ENCODE measurements at regions of chr2 and their contacts with region 1.

Region 1: DNA sequence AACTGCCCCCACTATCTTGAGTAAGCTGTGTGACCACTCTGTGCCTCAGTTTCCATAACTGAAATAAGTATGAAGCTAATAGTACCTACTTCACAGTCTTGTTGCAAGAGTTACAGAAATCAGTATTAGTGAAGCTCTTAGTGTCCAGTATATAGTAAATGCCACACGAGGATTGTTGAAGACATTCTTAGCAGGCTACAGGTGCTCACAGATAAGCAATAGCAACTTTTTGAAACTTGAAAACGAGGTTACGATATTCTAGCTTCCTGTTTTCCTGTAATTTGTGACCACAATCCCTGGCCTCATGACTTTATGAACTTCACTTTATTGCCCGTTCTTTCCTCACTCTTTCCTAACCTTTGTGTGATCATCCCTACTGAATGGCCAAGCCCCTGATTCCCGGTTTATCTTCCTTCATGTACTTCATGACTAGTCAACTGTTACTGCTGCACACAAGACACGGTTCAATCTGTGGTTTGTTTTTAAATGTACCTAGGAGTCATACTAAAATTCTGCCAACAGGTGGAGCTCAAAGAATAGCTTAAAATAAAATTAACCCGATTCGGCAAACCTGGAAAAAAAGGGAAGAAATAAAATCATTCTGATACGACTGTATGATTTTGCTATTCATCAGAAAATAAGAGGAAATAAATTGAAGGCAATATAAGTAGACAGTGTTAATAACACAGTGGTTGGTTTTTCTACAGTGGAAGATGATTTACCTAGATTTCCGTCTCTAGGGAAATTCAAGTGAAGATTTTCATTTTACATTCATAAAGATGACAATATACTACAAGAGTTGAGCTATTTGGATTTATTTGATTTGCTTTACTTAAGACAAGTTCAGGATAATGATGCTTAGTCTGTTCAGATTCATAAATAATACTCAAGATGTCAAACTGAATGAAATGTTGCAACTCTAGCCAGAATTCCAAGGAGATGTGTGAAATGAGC is 38.1 kb upstream of the STAT1 start:
- DNase-seq: no peak
- H3K4me3 ChIP-seq: no peak overlapping the region
- H3K27ac ChIP-seq: no peak overlapping the region
- H3K27me3 ChIP-seq: no peaks in the 10 kb centered on the region
- CTCF ChIP-seq: peak; percentile 69

Region 2: GRCh38 chr2:190979906-190980629 is 72.0 kb before region 1 on chr2:
- CTCF ChIA-PET with region 1: no interaction called
- POLR2A ChIA-PET with region 1: no interaction called
- DNase-seq: peak; percentile 88
- H3K4me3 ChIP-seq: peak overlapping the region; percentile 8
- H3K27ac ChIP-seq: peak overlapping the region; percentile 49
- H3K27me3 ChIP-seq: no peaks in the 10 kb centered on the region
- CTCF ChIP-seq: no peak

Region 3: DNA sequence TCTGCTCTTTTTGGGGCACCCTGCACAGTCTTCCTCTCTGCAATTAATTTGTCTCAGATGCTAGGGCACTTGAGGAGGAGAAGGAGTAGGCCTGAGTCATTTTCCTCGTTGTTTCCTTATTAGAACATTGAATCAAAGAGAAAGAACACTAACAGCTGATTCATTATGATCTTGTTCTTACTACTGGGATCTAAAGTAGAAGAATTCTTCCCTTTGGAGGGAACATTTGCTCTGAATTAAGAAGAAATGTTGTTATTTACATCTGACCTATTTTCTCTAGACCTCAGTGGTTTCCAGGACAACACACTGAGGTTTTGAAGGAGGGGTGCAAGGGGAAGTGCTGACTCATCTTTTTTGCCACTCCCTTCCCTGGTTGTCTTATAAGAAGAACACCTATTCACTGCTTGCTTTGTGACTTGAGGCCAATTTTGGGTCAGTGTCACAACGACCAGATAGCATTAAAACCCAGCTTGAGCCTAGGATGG is 13.8 kb before region 1 on chr2:
- CTCF ChIA-PET with region 1: interaction called, 38 read pairs
- POLR2A ChIA-PET with region 1: no interaction called
- DNase-seq: no peak
- H3K4me3 ChIP-seq: no peak overlapping the region
- H3K27ac ChIP-seq: peak overlapping the region; percentile 80
- H3K27me3 ChIP-seq: no peaks in the 10 kb centered on the region
- CTCF ChIP-seq: no peak

Region 4: DNA sequence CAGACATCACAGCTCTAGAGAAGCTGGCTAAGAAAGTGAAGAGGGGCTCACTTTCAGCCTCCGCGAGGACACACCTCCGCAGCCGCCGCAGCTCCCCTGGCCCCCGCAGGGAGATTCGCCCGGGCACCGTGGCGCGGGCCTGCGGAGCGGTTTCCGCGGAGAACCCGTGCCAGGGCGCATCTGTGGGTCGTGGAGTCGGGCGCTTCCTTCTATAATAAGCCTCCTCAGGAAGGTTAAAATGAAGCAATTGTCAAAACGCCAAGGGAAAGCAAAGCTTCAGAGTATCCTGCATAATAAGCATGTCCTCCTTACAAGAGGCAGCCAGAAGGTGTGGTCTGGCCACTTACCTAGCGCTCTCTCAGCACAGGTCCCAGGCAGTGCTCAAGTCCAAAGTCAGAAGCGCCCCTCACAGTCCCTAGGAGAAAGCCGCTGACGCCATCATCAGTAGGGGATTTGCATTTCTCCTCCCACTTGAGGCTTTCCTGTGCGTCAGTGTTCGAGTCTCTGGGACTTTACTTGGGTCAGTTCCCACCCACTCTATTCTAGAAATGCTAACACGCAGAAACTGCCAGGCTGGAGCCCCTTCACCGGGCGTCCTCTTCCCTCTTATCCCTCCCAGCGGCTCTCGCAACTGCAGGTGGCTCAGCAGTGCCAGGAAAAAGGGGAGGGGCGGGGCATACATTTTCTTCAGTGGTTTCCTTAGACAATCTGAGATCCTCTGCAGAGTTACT is 98.7 kb after region 1 on chr2 and contains the start of gene STAT4:
- CTCF ChIA-PET with region 1: interaction called, 251 read pairs
- POLR2A ChIA-PET with region 1: interaction called, 4 read pairs
- DNase-seq: no peak
- H3K4me3 ChIP-seq: peak within 1 kb of the TSS; percentile 58
- H3K27ac ChIP-seq: no peak within 1 kb of the TSS
- H3K27me3 ChIP-seq: no peaks in the 10 kb centered on the region
- CTCF ChIP-seq: no peak
- polyA plus RNA-seq, gene STAT4: 0.88 and 1.3 TPM in 2 replicates

Region 5: DNA sequence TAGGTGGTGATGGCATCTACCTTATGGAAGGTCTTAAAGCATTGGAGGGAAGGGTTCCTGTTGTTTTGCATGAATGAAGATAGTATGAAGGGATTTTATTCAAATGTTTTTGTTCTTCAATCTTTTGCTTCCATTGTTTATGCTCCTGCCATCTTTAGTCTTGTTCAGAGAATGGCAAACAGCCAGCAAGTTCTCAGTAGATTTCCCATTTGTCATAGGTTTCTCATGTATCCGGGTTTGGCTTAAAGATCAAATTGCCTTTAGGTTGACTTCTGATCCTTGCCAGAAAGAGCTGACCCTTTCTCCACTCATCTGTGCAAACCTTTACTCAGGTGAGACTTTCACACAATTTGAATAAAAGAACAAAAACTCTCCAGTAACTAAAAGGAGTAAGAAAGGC is 142.9 kb after region 1 on chr2:
- CTCF ChIA-PET with region 1: no interaction called
- POLR2A ChIA-PET with region 1: no interaction called
- DNase-seq: no peak
- H3K4me3 ChIP-seq: no peak overlapping the region
- H3K27ac ChIP-seq: no peak overlapping the region
- H3K27me3 ChIP-seq: no peaks in the 10 kb centered on the region
- CTCF ChIP-seq: no peak

Region 6: GRCh38 chr2:191218292-191218898 is 166.3 kb after region 1 on chr2:
- CTCF ChIA-PET with region 1: interaction called, 27 read pairs
- POLR2A ChIA-PET with region 1: no interaction called
- DNase-seq: peak; percentile 80
- H3K4me3 ChIP-seq: no peak overlapping the region
- H3K27ac ChIP-seq: no peak overlapping the region
- H3K27me3 ChIP-seq: no peaks in the 10 kb centered on the region
- CTCF ChIP-seq: peak; percentile 79

Region 7: GRCh38 chr2:191521608-191522208 is 469.6 kb after region 1 on chr2:
- CTCF ChIA-PET with region 1: interaction called, 91 read pairs
- POLR2A ChIA-PET with region 1: no interaction called
- DNase-seq: no peak
- H3K4me3 ChIP-seq: no peak overlapping the region
- H3K27ac ChIP-seq: no peak overlapping the region
- H3K27me3 ChIP-seq: no peaks in the 10 kb centered on the region
- CTCF ChIP-seq: peak; percentile 79

Measured in AG04450 (cell line).